Aorta (tissue), 5 donors: ENCODE measurements at regions of chr6 and their contacts with region 1.

Region 1: GRCh38 chr6:123715006-123715875 is 78.5 kb upstream of the TRDN start:
- DNase-seq: no peak
- ATAC-seq: no peak
- H3K4me3 ChIP-seq: no peak overlapping the region
- H3K27ac ChIP-seq: no peak overlapping the region
- H3K4me1 ChIP-seq: no peaks in the 10 kb centered on the region
- H3K27me3 ChIP-seq: no peaks in the 10 kb centered on the region

Region 2: GRCh38 chr6:123415844-123416468 is 299.3 kb before region 1 on chr6:
- intact Hi-C with region 1: loop called (anchors 1 to 2 kb)
- DNase-seq: no peak
- ATAC-seq: peak; percentile 75
- H3K4me3 ChIP-seq: no peak overlapping the region
- H3K27ac ChIP-seq: no peak overlapping the region
- H3K4me1 ChIP-seq: no peaks in the 10 kb centered on the region
- H3K27me3 ChIP-seq: no peaks in the 10 kb centered on the region